Activated CD4-positive, alpha-beta T cell treated with anti-CD3 and anti-CD28 coated beads, Interleukin-2, amount 10 ng/mL, durations not matched to agents 24 days and 14 days (primary cell): ENCODE measurements at regions of chr17 and their contacts with region 1.

Region 1: DNA sequence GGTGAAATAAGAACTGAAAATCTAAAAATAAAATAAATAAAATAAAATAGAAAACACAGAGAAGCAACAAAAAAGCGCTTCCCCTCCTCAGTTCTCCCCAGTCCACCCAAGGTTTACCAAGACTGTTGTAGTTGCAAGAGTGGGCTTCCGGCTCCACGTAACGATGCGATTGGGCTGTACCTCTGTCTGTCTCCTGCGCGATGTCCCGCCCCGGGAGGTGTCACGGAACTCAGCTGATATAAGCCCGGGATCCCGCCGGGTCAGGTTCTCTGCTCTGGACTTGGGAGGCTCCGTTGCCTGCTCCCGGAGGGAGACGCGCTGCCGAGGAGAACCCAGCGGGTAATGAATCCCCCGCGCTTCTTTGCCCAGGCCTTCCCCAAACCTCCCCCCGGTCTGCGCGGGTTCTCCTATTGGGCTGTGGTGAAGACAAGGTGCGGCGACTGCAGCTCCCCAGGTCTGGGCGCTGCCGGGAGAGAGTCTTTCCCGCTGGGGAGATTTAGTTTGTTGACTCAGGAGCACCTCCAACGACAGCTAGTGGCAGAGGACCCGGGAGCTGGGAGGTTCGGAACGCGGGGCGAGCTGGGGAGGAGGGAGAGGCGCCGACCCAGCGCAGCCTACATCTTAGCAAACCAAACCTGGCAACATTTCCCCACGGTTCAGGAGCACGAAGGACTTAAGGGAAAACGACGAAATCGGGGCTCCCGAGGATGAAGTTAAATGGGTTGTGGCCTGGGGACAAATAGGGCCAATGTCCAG is at the start of gene SLFN5:
- DNase-seq: peak; percentile 98
- H3K4me3 Mint-ChIP-seq: peak within 1 kb of the TSS; percentile 93
- H3K27ac Mint-ChIP-seq: peak within 1 kb of the TSS; percentile 95
- H3K4me1 Mint-ChIP-seq: peaks cover 71% of the 10 kb centered on the region
- H3K27me3 Mint-ChIP-seq: no peaks in the 10 kb centered on the region
- total RNA-seq, gene SLFN5: 6.9 and 8.9 TPM in 2 replicates

Region 2: GRCh38 chr17:34961093-34961911 is 281.7 kb before region 1 on chr17 and contains the starts of genes CCT6B and ZNF830:
- intact Hi-C with region 1: loop called (anchors 2 kb)
- DNase-seq: peak; percentile 97
- H3K4me3 Mint-ChIP-seq: peak within 1 kb of the TSS; percentile 98
- H3K27ac Mint-ChIP-seq: peak within 1 kb of the TSS; percentile 100
- H3K4me1 Mint-ChIP-seq: peaks cover 24% of the 10 kb centered on the region
- H3K27me3 Mint-ChIP-seq: peaks cover 2% of the 10 kb centered on the region
- total RNA-seq, gene CCT6B: 0.40 and 1.3 TPM in 2 replicates
- total RNA-seq, gene ZNF830: 24.7 and 28.4 TPM in 2 replicates

Region 3: DNA sequence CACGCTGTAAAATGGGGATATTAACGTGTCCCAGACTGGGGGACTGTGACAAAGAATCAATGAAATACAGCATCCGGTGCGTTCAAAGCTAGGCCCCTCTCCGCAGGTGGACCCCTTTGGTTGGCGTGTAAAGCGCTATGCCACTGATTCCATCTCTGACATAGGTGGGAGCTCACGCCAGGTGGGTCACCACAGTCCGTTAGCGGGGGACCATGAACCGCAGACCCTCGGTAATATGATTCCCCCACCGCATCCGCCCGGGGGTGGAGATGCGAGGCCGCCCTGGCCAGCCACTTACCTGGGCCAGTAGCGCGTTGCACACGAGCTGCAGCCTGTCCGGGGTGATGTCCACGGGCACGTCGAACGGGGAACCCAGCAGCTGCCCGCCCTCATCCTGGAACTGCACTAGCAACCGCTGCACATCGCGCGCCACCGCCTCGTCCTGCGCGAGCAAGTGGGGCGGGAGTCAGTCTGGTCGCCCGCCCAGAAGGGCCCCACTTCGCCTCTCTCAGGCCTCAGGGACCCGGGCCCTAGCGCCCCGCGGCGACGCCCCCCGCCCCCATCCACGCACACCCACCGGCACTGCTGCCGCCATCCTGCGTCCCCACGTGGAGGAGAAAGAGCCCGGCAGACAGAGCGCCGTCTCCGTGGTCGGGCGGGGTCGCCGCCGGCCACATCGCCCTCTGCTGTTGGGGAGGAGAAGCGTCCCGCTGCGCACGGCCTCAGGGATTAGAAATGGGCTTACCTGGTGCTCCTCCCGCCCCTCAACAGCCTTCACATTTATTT is 101.1 kb before region 1 on chr17 and contains the start of gene NLE1:
- intact Hi-C with region 1: loop called (anchors 1 kb)
- DNase-seq: peak; percentile 97
- H3K4me3 Mint-ChIP-seq: peak within 1 kb of the TSS; percentile 83
- H3K27ac Mint-ChIP-seq: peak within 1 kb of the TSS; percentile 81
- H3K4me1 Mint-ChIP-seq: peaks cover 17% of the 10 kb centered on the region
- H3K27me3 Mint-ChIP-seq: no peaks in the 10 kb centered on the region
- total RNA-seq, gene NLE1: 45.3 and 47.9 TPM in 2 replicates

Region 4: GRCh38 chr17:35286120-35286781 is 43.3 kb after region 1 on chr17:
- intact Hi-C with region 1: loop called (anchors 5 kb)
- DNase-seq: peak; percentile 66
- H3K4me3 Mint-ChIP-seq: no peak overlapping the region
- H3K27ac Mint-ChIP-seq: peak overlapping the region; percentile 14
- H3K4me1 Mint-ChIP-seq: peaks cover 26% of the 10 kb centered on the region
- H3K27me3 Mint-ChIP-seq: peaks cover 9% of the 10 kb centered on the region

Region 5: DNA sequence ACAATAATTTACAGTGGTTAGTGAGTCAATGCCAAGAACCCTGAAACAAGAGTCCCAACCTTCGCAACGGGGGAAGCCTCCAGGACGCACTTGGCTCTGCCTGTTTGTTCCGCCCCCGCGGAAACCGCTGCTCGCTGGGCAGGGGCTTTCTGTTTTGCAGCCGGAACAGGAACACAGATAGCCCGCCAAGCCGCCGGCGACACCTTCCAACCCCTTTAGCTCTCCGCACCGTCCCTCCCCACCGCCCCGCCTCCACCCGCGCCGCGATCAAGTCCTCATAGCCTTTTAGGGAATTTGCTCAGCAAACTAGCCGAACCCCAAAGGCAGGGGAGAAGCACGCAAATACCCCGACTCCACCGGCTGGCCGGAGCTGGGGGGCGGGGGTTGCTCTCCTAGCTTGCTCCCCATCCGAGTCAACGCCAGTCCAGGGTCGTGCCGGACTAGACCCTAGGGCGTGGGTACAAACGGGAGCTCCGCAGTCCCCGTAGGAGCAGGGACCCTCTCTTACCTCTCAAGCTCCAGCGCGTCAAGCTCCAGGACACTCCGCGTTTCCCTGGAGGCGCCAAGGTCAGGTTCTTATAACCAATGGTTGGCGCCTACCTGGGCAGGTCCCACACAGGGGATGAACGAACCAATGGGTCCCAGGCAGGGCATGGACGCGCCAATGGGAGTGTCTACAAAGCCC is 205.4 kb after region 1 on chr17 and contains the start of gene SLFN13:
- intact Hi-C with region 1: loop called (anchors 2 kb)
- DNase-seq: peak; percentile 95
- H3K4me3 Mint-ChIP-seq: peak within 1 kb of the TSS; percentile 69
- H3K27ac Mint-ChIP-seq: peak within 1 kb of the TSS; percentile 77
- H3K4me1 Mint-ChIP-seq: peaks cover 13% of the 10 kb centered on the region
- H3K27me3 Mint-ChIP-seq: no peaks in the 10 kb centered on the region
- total RNA-seq, gene SLFN13: 34.5 and 36.8 TPM in 2 replicates

Region 6: DNA sequence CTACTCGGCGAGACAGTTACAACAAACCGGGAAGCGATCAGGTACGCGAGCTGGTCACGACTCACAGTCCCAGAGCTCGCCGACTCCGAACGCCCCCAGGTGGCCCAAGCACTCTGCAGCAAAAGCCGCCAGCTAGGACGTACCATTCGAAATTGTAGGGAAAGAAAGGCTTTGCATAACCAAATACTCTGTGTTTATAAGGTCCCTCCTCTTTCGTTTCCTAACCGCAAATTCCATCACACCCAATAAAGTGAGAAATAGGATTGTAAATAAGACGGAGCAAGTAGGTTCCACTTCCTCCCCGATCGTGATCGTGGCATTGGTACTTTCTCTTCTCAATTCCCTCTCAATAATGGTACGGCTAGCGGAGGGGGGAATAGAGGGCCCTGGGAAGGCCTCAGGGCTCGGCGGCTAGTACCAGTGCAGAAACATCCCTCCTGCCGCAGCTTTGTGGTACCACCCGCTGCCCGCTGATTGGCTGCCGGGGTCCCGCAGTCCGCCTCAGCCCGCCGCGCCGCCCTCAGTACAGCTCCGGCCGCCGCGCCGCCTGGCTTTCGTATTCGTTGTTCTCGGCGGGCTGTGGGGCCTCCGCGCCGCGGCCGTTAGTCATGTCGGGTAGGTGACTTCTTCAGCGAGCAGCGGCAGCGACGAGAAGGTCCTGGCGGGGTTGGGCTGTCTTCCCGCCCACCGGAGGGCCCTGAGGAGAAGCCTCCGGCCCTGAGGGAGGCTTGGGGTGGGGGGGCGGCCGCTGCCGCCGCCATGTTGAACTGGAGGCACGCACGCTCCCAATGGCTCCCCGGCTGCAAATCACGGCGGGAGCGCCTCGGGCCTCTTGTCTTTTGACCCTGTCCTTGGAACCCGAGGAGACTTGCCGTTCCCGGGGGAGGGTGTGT is 566.2 kb after region 1 on chr17 and contains the start of gene TAF15:
- intact Hi-C with region 1: loop called (anchors 10 kb)
- DNase-seq: peak; percentile 99
- H3K4me3 Mint-ChIP-seq: peak within 1 kb of the TSS; percentile 99
- H3K27ac Mint-ChIP-seq: peak within 1 kb of the TSS; percentile 97
- H3K4me1 Mint-ChIP-seq: peaks cover 48% of the 10 kb centered on the region
- H3K27me3 Mint-ChIP-seq: no peaks in the 10 kb centered on the region
- total RNA-seq, gene TAF15: 326 and 338 TPM in 2 replicates